Body of pancreas (tissue), 4 donors: ENCODE measurements at regions of chr1 and their contacts with region 1.

Region 1: DNA sequence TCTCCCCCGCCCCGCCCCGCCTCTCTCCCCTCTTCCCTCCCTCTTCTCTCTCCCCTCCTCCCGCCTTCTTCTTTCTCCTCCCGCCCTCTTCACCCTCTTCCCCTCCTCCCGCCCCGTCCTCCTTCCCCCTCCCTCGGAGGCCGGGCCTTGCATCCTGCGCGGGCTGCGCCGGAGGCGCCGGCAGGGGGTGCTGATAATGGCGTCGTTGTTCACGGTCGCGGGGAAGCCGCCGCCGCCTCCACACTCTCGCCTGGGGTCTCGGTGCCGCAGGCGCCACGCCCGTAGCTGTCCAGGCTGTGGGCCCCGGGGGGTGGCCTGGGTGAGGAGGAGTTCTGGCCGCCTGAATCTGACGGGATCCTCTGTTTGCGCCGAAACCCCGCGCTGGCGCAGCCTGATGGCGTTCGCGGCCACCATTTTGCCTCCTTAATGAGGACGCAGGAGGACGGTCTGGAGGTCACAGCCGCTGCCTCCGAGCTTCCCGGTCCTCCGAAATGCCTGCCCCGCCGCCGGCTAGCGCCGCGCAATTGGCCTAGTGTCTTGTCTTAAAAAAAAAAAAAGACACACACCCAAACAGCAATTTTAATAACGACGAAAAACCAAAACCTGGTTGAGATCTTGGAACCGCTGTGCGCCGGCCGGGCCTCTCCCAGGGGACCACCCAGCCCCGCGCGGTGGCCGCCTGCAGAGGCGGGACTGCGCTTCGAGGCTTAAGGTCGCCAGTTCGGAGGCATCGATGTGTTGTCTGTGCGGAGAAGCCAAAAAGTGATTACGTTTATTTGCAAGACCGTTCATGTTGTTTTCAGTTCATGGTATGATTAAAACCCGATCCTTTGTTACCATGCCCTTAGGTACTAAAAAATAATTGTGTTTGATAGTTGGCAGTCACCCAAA is 106.6 kb upstream of the HNRNPU start:
- DNase-seq: peak; percentile 93 to 96 (median 94)
- ATAC-seq: peak; percentile 87
- H3K4me3 ChIP-seq: peak overlapping the region; percentile 22 to 57
- H3K27ac ChIP-seq: peak overlapping the region; percentile 97 to 100 (median 100)
- H3K4me1 ChIP-seq: peaks cover 20% of the 10 kb centered on the region
- H3K27me3 ChIP-seq: no peaks in the 10 kb centered on the region
- CTCF ChIP-seq: peak; percentile 33 to 92 (median 76)
- POLR2A ChIP-seq: peak; percentile 91 to 97 (median 94)

Region 2: GRCh38 chr1:244874974-244875579 is 95.8 kb before region 1 on chr1:
- intact Hi-C with region 1: loop called (anchors 10 kb)
- DNase-seq: no peak
- ATAC-seq: no peak
- H3K4me3 ChIP-seq: no peak overlapping the region
- H3K27ac ChIP-seq: no peak overlapping the region
- H3K4me1 ChIP-seq: no peaks in the 10 kb centered on the region
- H3K27me3 ChIP-seq: no peaks in the 10 kb centered on the region
- CTCF ChIP-seq: no peak
- POLR2A ChIP-seq: no peak